ENCODE measurements at regions of chr17 and their contacts with region 1.

Region 1: GRCh38 chr17:34637548-34638525 is 58.5 kb downstream of the TMEM132E start:
- DNase-seq: peak; percentile 51 to 89
- H3K4me3 ChIP-seq: peak overlapping the region in 1 of 4 experiments; percentile 36; a peak in 2 of 8 replicates
- H3K27ac ChIP-seq: no peak overlapping the region
- H3K4me1 ChIP-seq: peaks cover 0 to 16% (median 2%) of the 10 kb centered on the region in 4 experiments; a peak in 5 of 7 replicates
- H3K27me3 ChIP-seq: peaks cover 2 to 27% (median 18%) of the 10 kb centered on the region in 4 experiments; a peak in 6 of 7 replicates
- CTCF ChIP-seq: peak; percentile 87 to 98 (median 92)
- EP300 ChIP-seq: no peak
- POLR2A ChIP-seq: no peak
- RAD21 ChIP-seq: peak; percentile 87 to 91

Region 2: DNA sequence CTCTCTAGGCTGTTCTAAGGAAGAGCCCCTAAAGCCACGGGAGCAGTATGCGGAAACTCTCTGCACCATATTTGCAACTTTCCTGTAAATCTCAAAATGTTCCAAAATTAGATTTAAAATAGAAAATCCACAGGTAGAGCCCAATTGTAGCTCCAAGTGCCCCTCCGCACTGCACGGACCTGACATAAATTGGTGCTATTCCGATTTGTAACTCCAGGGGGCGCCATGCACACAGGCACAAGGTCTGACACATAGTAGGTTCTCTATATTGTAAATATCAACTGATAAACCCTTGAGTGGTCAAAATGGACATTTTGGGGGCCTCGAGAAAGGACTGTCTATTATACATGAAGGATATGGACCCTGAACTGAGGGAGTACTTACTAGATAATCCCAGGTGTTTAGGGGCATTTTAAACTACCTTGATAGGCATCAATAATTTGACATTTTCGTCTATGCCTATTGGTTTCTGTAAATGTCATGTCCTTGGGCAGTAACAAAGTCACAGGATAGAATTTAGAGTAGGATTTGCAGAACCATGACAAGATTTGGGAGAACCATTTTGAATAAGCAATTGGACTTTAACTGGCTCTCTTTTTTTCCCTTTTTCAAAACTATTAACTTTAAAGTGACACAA is 95.0 kb before region 1 on chr17:
- CTCF ChIA-PET with region 1: interaction called, 76 read pairs
- POLR2A ChIA-PET with region 1: no interaction called
- DNase-seq: peak in 1 of 2 experiments; percentile 89
- H3K4me3 ChIP-seq: no peak overlapping the region
- H3K27ac ChIP-seq: no peak overlapping the region
- H3K4me1 ChIP-seq: peaks cover 0 to 4% (median 3%) of the 10 kb centered on the region in 4 experiments; a peak in 2 of 7 replicates
- H3K27me3 ChIP-seq: peaks cover 0 to 5% (median 2%) of the 10 kb centered on the region in 4 experiments; a peak in 1 of 7 replicates
- CTCF ChIP-seq: peak; percentile 63 to 85 (median 80)
- EP300 ChIP-seq: no peak
- POLR2A ChIP-seq: no peak
- RAD21 ChIP-seq: peak; percentile 91 to 93

Region 3: GRCh38 chr17:34567691-34568465 is 70.0 kb before region 1 on chr17:
- CTCF ChIA-PET with region 1: interaction called, 13 read pairs
- POLR2A ChIA-PET with region 1: no interaction called
- DNase-seq: no peak
- H3K4me3 ChIP-seq: no peak overlapping the region
- H3K27ac ChIP-seq: no peak overlapping the region
- H3K4me1 ChIP-seq: peaks cover 0 to 11% (median 4%) of the 10 kb centered on the region in 4 experiments; a peak in 4 of 7 replicates
- H3K27me3 ChIP-seq: peaks cover 0 to 16% (median 4%) of the 10 kb centered on the region in 4 experiments; a peak in 4 of 7 replicates
- CTCF ChIP-seq: no peak
- EP300 ChIP-seq: no peak
- POLR2A ChIP-seq: no peak
- RAD21 ChIP-seq: no peak

Region 4: DNA sequence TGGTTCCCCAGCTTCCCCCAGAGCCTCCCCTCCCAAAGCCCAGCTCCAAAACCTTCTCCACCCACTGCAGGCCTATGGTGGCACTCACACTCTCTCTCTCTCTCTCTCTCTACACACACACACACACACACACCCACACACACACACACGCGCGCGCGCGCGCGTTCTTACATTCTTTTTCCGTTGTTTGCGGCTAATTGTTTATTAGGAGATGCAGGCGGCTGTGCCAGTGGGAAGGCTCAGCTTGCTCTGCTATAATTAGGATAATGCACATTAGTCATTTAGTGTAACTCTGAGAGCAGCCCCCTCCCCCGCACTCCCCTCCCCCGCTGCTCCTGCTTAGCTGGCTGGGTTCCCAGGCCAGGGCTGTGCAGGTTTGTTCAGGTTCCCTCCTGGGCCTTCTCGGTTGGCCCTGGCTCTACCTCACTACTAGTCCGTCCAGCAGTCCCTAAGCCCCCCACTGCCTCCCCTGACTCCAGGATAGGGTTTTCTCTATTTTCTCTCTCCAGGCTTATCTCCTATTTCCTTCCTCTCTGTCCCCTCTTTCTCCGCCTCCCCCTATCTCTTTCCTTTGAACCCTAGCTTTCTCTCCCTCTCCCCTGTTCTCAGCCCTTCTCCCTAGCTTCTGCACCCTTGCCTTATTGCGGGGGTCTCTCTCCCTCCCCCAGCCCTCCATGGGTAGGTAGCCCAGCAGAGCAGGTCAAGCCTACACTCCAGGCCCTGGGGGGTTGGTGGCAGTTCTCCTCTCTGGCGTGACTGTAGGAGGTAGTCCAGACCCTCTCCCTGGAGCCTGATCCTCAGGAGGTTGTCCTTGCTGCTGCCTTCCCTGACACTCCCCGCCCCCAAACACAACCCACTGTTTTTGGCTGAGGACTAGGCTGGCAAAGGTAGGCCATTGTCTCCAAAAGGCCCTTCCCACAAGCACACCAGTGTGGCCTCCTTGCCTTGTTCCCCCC is 24.5 kb before region 1 on chr17:
- CTCF ChIA-PET with region 1: interaction called, 10 read pairs
- POLR2A ChIA-PET with region 1: interaction called, 3 read pairs
- DNase-seq: peak in 1 of 2 experiments; percentile 54
- H3K4me3 ChIP-seq: no peak overlapping the region
- H3K27ac ChIP-seq: no peak overlapping the region
- H3K4me1 ChIP-seq: peaks cover 25 to 56% (median 42%) of the 10 kb centered on the region in 4 experiments
- H3K27me3 ChIP-seq: peaks cover 0 to 7% (median 2%) of the 10 kb centered on the region in 4 experiments; a peak in 4 of 7 replicates
- CTCF ChIP-seq: no peak
- EP300 ChIP-seq: no peak
- POLR2A ChIP-seq: no peak
- RAD21 ChIP-seq: no peak

Region 5: DNA sequence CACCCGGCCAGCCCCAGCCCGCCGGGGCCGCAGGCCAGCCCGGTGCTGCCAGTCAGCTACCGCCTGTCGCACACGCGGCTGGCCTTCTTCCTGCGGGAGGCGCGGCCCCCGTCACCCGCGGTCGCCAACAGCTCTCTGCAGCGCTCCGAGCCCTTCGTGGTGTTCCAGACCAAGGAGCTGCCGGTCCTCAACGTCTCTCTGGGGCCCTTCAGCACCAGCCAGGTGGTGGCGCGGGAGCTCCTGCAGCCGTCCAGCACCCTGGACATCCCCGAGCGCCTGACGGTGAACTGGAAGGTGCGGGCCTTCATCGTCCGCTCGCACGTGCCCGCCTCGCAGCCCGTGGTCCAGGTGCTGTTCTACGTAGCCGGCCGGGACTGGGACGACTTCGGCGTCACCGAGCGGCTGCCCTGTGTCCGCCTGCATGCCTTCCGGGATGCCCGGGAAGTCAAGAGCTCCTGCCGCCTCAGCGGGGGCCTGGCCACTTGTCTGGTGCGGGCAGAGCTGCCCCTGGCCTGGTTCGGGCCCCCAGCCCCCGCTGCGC is 11.6 kb before region 1 on chr17:
- CTCF ChIA-PET with region 1: interaction called, 26 read pairs
- POLR2A ChIA-PET with region 1: no interaction called
- DNase-seq: peak in 1 of 2 experiments; percentile 58
- H3K4me3 ChIP-seq: no peak overlapping the region
- H3K27ac ChIP-seq: no peak overlapping the region
- H3K4me1 ChIP-seq: peaks cover 2 to 21% (median 7%) of the 10 kb centered on the region in 4 experiments; a peak in 4 of 7 replicates
- H3K27me3 ChIP-seq: peaks cover 6 to 13% (median 9%) of the 10 kb centered on the region in 4 experiments
- CTCF ChIP-seq: no peak
- EP300 ChIP-seq: no peak
- POLR2A ChIP-seq: no peak
- RAD21 ChIP-seq: peak in 1 of 2 experiments; percentile 20; a peak in 1 of 4 replicates

Region 6: DNA sequence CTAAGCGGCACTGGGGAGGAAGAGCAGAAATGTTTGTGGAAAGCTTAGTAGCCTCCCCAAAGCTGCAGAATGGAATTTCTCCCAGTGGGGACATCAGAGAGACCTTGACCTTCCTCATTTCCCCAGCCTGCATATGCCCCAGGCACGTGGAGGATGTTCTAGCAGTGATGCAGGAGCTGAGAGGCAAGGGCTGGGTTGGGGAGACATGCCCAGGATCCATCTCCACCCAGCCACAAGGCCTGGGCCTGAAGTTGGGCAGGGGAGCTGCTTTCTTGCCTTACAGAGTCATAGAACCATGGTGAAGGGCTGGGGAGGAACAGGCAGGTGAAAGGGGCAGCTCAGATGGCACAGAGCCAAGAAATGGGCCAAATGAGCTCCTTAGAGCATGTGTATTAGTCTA is 45.6 kb after region 1 on chr17:
- CTCF ChIA-PET with region 1: no interaction called
- POLR2A ChIA-PET with region 1: no interaction called
- DNase-seq: no peak
- H3K4me3 ChIP-seq: no peak overlapping the region
- H3K27ac ChIP-seq: no peak overlapping the region
- H3K4me1 ChIP-seq: no peaks in the 10 kb centered on the region
- H3K27me3 ChIP-seq: no peaks in the 10 kb centered on the region; a peak in 1 of 7 replicates
- CTCF ChIP-seq: no peak
- EP300 ChIP-seq: no peak
- POLR2A ChIP-seq: no peak
- RAD21 ChIP-seq: no peak

Region 7: GRCh38 chr17:35345926-35346771 is 708.3 kb after region 1 on chr17:
- CTCF ChIA-PET with region 1: no interaction called
- POLR2A ChIA-PET with region 1: no interaction called
- DNase-seq: peak in 1 of 2 experiments; percentile 64
- H3K4me3 ChIP-seq: peak overlapping the region; percentile 63 to 78 (median 67)
- H3K27ac ChIP-seq: no peak overlapping the region
- H3K4me1 ChIP-seq: peaks cover 0 to 3% (median under 1%) of the 10 kb centered on the region in 4 experiments; a peak in 2 of 7 replicates
- H3K27me3 ChIP-seq: peaks cover 12 to 53% (median 41%) of the 10 kb centered on the region in 4 experiments
- CTCF ChIP-seq: no peak
- EP300 ChIP-seq: no peak
- POLR2A ChIP-seq: no peak
- RAD21 ChIP-seq: no peak